Activated CD4-positive, alpha-beta T cell treated with anti-CD3 and anti-CD28 coated beads for 36 hours (primary cell): ENCODE measurements at regions of chr21 and their contacts with region 1.

Region 1: DNA sequence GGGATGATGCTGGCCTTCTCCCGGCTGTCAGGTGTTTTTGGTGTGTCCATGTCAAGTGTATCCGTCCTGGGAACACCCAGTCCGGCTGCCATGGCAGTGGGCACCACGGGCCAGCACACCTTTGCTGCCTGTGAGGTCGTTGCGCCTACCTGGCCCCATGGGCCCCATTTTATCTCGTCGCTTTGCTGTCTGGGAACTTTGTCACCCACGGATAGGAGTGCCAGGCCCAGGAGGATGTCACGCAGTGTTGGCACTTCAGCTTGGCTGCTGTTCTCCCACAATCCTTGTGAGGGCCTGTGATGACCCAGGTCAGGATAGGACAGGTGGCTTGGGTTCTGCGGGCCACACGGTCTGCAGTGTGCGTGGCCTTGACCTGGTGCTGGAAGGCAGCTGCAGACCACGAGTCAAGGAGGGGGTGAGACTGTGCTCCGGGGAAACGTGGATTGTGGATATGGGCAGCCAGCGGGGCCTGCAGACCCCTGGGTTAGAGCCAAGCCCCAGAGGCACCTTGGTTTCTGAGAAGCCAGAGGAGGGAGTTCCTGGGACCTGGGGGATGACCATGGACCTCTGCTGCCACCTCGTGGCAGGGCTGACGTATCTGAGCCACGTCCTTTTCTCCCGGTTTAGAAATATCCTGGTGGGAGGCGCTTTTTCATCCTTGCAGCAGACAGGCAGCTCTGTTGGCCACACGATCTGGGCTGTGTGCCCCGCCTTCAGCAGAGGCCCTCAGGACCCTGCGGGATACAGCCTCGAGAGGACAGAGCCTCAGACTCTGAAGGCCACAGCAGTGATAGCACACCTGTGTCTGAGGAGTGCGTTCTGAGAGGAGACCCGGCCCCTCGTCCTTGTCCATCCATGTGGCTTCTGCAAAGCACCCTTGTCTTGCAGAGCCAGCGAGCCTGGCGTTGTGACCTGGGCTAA is 161.1 kb upstream of the COL6A1 start:
- DNase-seq: peak; percentile 91
- ATAC-seq: peak; percentile 32
- H3K4me3 Mint-ChIP-seq: no peak overlapping the region
- H3K27ac Mint-ChIP-seq: peak overlapping the region; percentile 99
- H3K4me1 Mint-ChIP-seq: peaks cover 51% of the 10 kb centered on the region
- H3K27me3 Mint-ChIP-seq: peaks cover 2% of the 10 kb centered on the region

Region 2: DNA sequence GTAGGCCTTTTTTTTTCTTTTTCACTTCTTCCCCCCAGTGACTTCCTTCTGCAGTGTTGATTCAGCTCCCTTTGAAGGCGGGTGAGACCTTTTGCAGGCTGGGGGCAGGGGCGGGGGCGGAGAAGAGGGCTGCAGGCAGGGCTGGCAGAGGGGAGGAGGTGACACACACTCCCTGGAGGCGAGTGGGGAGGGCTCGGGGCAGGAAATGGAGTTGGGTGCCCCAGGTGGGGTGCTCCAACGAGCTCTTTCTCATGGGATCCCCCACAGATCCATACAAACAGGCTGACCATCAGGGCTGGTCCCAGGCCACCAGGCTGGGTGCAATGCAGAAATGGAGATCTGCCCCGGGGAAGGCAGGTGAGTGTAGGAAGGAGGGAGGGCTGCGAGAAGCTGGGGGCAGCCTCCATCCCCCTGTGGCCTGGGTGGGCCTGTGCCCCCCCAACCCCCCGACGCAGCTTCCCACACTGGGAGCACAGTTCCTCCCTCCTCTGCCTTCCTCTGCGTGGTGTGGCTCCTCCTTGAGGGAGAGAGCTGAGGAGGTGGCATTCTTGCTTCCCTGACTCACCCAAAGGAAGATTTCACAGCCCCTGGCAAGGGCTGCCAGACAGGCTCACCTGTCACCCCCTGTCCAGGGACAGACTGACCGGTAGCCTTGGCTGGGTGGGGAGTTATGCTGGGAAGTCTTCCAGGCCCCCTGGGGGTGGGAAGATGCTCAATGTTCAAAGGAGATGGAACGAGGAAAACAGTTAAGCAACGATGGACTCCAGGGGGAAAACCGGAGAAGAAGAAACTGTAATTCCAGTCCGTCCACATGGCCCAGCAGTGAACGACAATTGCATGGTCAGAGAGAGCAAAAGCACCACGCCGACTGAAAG is 892.6 kb before region 1 on chr21:
- CTCF ChIA-PET with region 1: no interaction called
- POLR2A ChIA-PET with region 1: no interaction called
- intact Hi-C with region 1: loop called in 1 of 2 experiments (anchors 2 kb)
- DNase-seq: peak; percentile 97
- ATAC-seq: peak; percentile 74
- H3K4me3 Mint-ChIP-seq: peak overlapping the region; percentile 90
- H3K27ac Mint-ChIP-seq: peak overlapping the region; percentile 94
- H3K4me1 Mint-ChIP-seq: peaks cover 80% of the 10 kb centered on the region
- H3K27me3 Mint-ChIP-seq: no peaks in the 10 kb centered on the region

Region 3: GRCh38 chr21:45228171-45228641 is 592.2 kb before region 1 on chr21:
- CTCF ChIA-PET with region 1: no interaction called
- POLR2A ChIA-PET with region 1: no interaction called
- intact Hi-C with region 1: loop called in 1 of 2 experiments (anchors 1 kb)
- DNase-seq: peak; percentile 90
- ATAC-seq: peak; percentile 91
- H3K4me3 Mint-ChIP-seq: no peak overlapping the region
- H3K27ac Mint-ChIP-seq: no peak overlapping the region
- H3K4me1 Mint-ChIP-seq: peaks cover 48% of the 10 kb centered on the region
- H3K27me3 Mint-ChIP-seq: no peaks in the 10 kb centered on the region

Region 4: DNA sequence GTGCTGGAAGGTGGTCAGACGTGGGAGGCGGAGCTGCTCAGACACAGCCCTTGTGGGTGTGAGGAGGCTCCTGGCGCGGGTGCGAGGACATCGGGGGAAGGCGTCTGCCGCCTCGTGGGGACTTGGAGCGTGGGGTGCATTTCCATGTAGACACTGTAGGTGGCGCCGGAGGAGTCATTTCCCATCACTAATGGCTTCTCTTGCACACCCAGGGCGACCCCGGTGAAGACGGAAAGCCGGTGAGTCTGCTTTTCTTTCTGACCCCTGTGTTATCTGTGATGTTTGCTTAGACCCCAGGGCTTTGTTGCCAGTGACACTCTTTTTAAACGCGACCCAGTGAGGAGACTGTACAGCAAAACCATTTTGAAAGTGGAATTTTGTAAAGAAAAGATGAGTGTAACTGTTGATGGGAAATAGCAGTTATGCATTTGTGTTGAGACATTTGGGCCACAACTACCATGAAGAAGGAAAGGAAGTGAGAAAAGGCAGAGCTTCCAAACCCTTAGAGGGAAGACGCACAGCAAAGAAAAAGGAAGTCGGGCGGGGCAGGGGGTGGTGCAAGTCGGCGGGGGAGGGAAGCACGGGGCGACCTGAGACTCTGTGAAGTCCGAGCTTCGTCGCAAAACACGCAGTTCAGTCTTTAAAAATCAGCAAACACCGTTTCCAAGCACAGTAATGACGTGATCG is 342.2 kb before region 1 on chr21:
- CTCF ChIA-PET with region 1: interaction called, 4 read pairs
- POLR2A ChIA-PET with region 1: no interaction called
- intact Hi-C with region 1: loop called (anchors 1 to 2 kb)
- DNase-seq: peak; percentile 89
- ATAC-seq: peak; percentile 74
- H3K4me3 Mint-ChIP-seq: peak overlapping the region; percentile 62
- H3K27ac Mint-ChIP-seq: peak overlapping the region; percentile 84
- H3K4me1 Mint-ChIP-seq: peaks cover 35% of the 10 kb centered on the region
- H3K27me3 Mint-ChIP-seq: no peaks in the 10 kb centered on the region

Region 5: DNA sequence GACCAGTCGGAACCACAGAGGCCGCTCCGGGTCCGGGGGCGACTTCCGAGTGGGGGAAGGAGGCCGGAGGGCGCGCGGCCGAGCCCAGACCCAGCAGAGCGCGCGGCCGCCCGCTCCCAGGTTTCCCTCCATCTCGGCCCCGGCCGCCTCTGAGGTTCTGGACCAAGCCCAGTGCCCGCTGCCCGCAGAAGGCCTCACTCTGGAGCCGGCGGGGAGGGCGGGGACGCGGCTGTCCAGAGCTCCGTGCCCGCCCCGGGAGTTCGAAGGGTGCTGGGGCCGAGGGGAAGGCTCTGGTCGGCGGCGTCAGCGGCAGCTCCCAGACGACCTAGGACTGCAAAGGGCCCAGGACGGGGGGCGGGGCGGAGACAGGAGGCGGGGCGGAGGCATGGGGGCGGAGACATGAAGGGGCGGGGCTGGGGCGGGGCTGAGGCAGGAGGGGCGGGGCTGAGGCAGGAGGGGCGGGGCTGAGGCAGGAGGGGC is 230.1 kb before region 1 on chr21:
- CTCF ChIA-PET with region 1: no interaction called
- POLR2A ChIA-PET with region 1: interaction called, 6 read pairs
- intact Hi-C with region 1: loop called (anchors 1 kb)
- DNase-seq: peak; percentile 92
- ATAC-seq: peak; percentile 60
- H3K4me3 Mint-ChIP-seq: peak overlapping the region; percentile 36
- H3K27ac Mint-ChIP-seq: no peak overlapping the region
- H3K4me1 Mint-ChIP-seq: peaks cover 16% of the 10 kb centered on the region
- H3K27me3 Mint-ChIP-seq: peaks cover 16% of the 10 kb centered on the region

Region 6: GRCh38 chr21:45698493-45699184 is 121.8 kb before region 1 on chr21:
- CTCF ChIA-PET with region 1: no interaction called
- POLR2A ChIA-PET with region 1: interaction called, 6 read pairs
- intact Hi-C with region 1: loop called (anchors 1 to 5 kb)
- DNase-seq: peak; percentile 61
- ATAC-seq: peak; percentile 84
- H3K4me3 Mint-ChIP-seq: no peak overlapping the region
- H3K27ac Mint-ChIP-seq: peak overlapping the region; percentile 83
- H3K4me1 Mint-ChIP-seq: peaks cover 34% of the 10 kb centered on the region
- H3K27me3 Mint-ChIP-seq: no peaks in the 10 kb centered on the region

Region 7: DNA sequence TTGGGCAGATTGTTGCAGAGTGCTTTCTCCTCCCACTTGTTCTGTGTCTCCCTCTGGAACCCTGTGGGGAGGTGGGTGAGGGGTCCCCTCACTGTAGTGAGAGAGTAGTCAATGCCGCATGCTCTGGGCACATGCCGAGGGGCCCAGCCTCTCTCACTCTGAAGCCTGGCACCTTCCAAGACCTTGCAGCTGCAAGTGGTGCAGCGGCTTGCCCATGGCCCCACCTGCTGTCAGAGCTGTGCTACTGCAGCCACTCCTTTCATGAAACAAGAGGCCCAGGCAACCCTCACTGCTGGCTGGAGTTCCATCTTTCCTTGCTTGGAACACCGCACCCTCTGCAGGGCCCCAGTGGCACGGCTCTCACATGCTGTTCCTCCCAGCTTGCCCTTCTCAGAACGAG is 102.7 kb after region 1 on chr21:
- CTCF ChIA-PET with region 1: no interaction called
- POLR2A ChIA-PET with region 1: no interaction called
- intact Hi-C with region 1: loop called (anchors 2 to 10 kb)
- DNase-seq: peak; percentile 82
- ATAC-seq: peak; percentile 85
- H3K4me3 Mint-ChIP-seq: no peak overlapping the region
- H3K27ac Mint-ChIP-seq: no peak overlapping the region
- H3K4me1 Mint-ChIP-seq: peaks cover 12% of the 10 kb centered on the region
- H3K27me3 Mint-ChIP-seq: no peaks in the 10 kb centered on the region

Region 8: GRCh38 chr21:45995686-45996179 is 175.3 kb after region 1 on chr21:
- CTCF ChIA-PET with region 1: no interaction called
- POLR2A ChIA-PET with region 1: no interaction called
- intact Hi-C with region 1: no loop called
- DNase-seq: peak; percentile 30
- ATAC-seq: peak; percentile 57
- H3K4me3 Mint-ChIP-seq: no peak overlapping the region
- H3K27ac Mint-ChIP-seq: no peak overlapping the region
- H3K4me1 Mint-ChIP-seq: no peaks in the 10 kb centered on the region
- H3K27me3 Mint-ChIP-seq: no peaks in the 10 kb centered on the region